Activated CD4-positive, alpha-beta T cell treated with anti-CD3 and anti-CD28 coated beads, Interleukin-2, amount 10 ng/mL, durations not matched to agents 24 days and 14 days (primary cell): ENCODE measurements at regions of chr16 and their contacts with region 1.

Region 1: GRCh38 chr16:56519459-56520250 is at the start of gene BBS2:
- DNase-seq: peak; percentile 97
- H3K4me3 Mint-ChIP-seq: peak within 1 kb of the TSS; percentile 85
- H3K27ac Mint-ChIP-seq: peak within 1 kb of the TSS; percentile 71
- H3K4me1 Mint-ChIP-seq: peaks cover 16% of the 10 kb centered on the region
- H3K27me3 Mint-ChIP-seq: no peaks in the 10 kb centered on the region
- total RNA-seq, gene BBS2: 8.5 and 10.9 TPM in 2 replicates

Region 2: GRCh38 chr16:56355786-56356275 is 163.8 kb before region 1 on chr16:
- intact Hi-C with region 1: no loop called
- DNase-seq: no peak
- H3K4me3 Mint-ChIP-seq: peak overlapping the region; percentile 82
- H3K27ac Mint-ChIP-seq: peak overlapping the region; percentile 97
- H3K4me1 Mint-ChIP-seq: peaks cover 33% of the 10 kb centered on the region
- H3K27me3 Mint-ChIP-seq: peaks cover 2% of the 10 kb centered on the region

Region 3: DNA sequence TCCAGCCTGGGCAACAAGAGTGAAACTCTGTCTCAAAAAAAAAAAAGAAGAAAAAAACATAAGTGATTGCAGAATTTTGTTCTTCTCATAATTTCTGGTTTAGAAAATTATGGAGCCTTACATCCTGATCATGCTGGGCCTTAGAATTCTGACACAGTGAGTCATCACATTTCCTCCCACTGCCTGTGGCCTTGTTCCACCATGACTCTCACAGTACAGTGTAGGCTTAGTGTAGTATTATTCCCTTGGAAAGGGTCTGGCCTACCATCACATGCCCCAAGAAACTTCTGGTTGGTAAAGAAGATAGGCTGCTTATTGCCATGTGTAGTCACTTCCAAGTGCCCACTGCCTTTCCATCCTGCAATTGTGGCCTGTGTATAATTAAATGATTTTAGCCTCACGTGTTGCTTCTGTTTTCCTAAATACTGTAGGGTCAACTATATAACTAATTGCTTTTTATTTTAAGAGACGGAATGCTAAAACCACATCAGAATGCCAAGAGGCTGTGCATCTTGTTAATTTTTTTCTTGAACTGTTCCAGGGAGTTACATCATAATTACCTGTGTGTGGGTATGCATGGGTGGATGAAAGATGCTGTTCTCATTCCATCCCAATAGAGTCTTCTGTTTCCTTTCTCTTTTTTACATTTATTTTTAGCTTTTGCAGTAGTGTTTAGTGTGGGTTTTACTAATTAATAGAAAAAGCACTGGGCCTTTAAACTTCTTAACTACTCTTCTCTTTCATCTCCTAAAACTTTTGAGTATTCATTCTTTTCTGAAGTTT is 42.4 kb before region 1 on chr16:
- intact Hi-C with region 1: no loop called
- DNase-seq: no peak
- H3K4me3 Mint-ChIP-seq: no peak overlapping the region
- H3K27ac Mint-ChIP-seq: no peak overlapping the region
- H3K4me1 Mint-ChIP-seq: peaks cover 12% of the 10 kb centered on the region
- H3K27me3 Mint-ChIP-seq: no peaks in the 10 kb centered on the region

Region 4: GRCh38 chr16:56708525-56709442 is 189.1 kb after region 1 on chr16:
- intact Hi-C with region 1: loop called (anchors 10 kb)
- DNase-seq: peak; percentile 76
- H3K4me3 Mint-ChIP-seq: peak overlapping the region; percentile 67
- H3K27ac Mint-ChIP-seq: peak overlapping the region; percentile 73
- H3K4me1 Mint-ChIP-seq: peaks cover 29% of the 10 kb centered on the region
- H3K27me3 Mint-ChIP-seq: no peaks in the 10 kb centered on the region